OCI-LY7 (cell line): ENCODE measurements at regions of chr6 and their contacts with region 1.

Region 1: DNA sequence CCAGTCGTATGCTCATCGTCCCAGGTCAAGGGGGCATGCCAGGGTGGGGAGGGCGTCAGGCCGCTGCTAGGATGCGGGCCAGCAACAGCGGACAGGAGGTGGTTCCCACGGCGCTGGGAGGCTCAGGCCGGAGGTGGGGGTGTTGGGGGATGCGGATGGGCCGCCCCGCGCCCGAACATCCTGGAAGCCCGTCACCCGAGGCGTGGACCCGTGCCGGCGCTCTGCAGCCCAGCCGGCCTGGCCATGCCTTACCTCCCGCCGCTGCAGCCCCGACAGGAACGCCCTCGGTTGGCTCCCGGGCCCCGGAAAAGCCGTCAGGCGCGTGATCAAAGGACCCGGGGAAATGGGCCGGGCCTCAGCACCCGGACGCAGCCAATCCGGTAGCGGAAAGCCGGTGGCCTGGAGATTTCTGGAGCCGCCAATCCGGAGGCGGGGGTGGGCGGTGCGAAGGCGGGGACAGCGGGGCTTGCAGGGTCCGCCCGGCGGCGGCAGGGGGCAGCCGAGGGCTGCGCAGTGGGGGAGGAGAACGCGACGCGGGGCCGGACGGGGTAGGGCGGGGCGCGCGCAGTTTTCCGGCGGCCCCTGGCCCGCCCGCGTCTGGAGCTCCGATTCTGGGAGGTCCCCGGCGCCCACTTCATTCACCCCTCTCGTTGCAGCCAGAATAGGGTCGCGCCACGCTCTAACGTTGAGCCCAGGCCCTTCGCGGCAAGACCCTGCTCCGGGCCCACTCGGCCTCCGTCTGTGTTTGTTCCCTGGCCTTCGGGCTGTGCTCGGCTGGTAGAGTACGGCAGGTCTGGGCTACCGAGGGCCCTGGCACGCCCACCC is at the start of gene SMIM29:
- DNase-seq: peak; percentile 97
- H3K4me3 ChIP-seq: peak within 1 kb of the TSS; percentile 81
- H3K27ac ChIP-seq: peak within 1 kb of the TSS; percentile 41
- H3K4me1 ChIP-seq: peaks cover 31% of the 10 kb centered on the region
- CTCF ChIP-seq: peak; percentile 81
- total RNA-seq, gene SMIM29: 14.1 and 17.3 TPM in 2 replicates

Region 2: DNA sequence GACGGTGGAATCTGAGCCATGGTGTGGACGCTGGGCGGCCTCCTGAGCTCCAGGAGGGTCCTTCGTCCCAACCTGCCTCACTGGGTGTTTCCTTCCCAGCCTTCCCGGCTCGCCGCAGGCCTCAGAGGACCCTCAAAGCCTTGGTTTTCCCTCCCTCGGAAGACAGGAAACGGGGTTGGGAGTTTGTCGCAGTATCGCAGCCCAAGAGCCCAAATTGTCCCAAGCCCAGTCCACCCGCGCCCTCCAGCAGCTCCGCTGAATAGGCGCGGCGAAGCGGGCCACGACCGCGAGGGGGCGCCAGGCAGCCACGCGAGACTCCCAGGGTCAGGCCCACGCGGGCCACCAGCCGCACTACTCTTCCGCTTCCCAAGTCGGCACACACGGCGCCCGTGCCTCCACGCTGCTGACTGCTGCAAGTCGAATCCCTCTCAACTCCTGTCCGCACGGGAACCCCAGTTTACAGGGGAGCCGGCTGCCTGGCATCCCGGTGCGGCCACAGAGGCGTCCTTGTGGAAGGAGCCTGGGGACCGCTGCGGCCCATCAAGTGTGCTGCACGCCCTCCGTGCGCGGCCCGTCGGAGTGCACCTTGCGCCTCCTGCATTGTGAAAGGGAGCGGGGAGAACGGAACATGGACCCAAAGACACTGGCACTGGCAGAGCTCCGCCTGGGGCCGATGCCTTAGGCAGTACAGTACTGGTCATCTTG is 52.7 kb before region 1 on chr6:
- CTCF ChIA-PET with region 1: interaction called, 3 read pairs
- POLR2A ChIA-PET with region 1: interaction called, 3 read pairs
- intact Hi-C with region 1: loop called (anchors 2 kb)
- DNase-seq: peak; percentile 79
- H3K4me3 ChIP-seq: peak overlapping the region; percentile 43
- H3K27ac ChIP-seq: no peak overlapping the region
- H3K4me1 ChIP-seq: peaks cover 7% of the 10 kb centered on the region
- CTCF ChIP-seq: peak; percentile 90

Region 3: GRCh38 chr6:34392497-34393190 is 143.7 kb after region 1 on chr6 and contains the start of gene NUDT3:
- CTCF ChIA-PET with region 1: no interaction called
- POLR2A ChIA-PET with region 1: interaction called, 3 read pairs
- intact Hi-C with region 1: loop called (anchors 2 kb)
- DNase-seq: peak; percentile 98
- H3K4me3 ChIP-seq: peak within 1 kb of the TSS; percentile 85
- H3K27ac ChIP-seq: peak within 1 kb of the TSS; percentile 76
- H3K4me1 ChIP-seq: peaks cover 23% of the 10 kb centered on the region
- CTCF ChIP-seq: peak; percentile 78
- total RNA-seq, gene NUDT3: 26.8 and 30.7 TPM in 2 replicates

Region 4: GRCh38 chr6:34425498-34426410 is 176.8 kb after region 1 on chr6 and contains the start of gene RPS10:
- CTCF ChIA-PET with region 1: interaction called, 4 read pairs
- POLR2A ChIA-PET with region 1: no interaction called
- intact Hi-C with region 1: loop called (anchors 1 kb)
- DNase-seq: peak; percentile 93
- H3K4me3 ChIP-seq: peak within 1 kb of the TSS; percentile 97
- H3K27ac ChIP-seq: peak within 1 kb of the TSS; percentile 70
- H3K4me1 ChIP-seq: peaks cover 21% of the 10 kb centered on the region
- CTCF ChIP-seq: no peak
- total RNA-seq, gene RPS10: 2,738 and 2,938 TPM in 2 replicates

Region 5: GRCh38 chr6:34608321-34609091 is 359.6 kb after region 1 on chr6:
- CTCF ChIA-PET with region 1: no interaction called
- POLR2A ChIA-PET with region 1: interaction called, 3 read pairs
- intact Hi-C with region 1: loop called (anchors 5 kb)
- DNase-seq: no peak
- H3K4me3 ChIP-seq: no peak overlapping the region
- H3K27ac ChIP-seq: no peak overlapping the region
- H3K4me1 ChIP-seq: no peaks in the 10 kb centered on the region
- CTCF ChIP-seq: no peak